K562 (cell line): ENCODE measurements at regions of chr22 and their contacts with region 1.

Region 1: DNA sequence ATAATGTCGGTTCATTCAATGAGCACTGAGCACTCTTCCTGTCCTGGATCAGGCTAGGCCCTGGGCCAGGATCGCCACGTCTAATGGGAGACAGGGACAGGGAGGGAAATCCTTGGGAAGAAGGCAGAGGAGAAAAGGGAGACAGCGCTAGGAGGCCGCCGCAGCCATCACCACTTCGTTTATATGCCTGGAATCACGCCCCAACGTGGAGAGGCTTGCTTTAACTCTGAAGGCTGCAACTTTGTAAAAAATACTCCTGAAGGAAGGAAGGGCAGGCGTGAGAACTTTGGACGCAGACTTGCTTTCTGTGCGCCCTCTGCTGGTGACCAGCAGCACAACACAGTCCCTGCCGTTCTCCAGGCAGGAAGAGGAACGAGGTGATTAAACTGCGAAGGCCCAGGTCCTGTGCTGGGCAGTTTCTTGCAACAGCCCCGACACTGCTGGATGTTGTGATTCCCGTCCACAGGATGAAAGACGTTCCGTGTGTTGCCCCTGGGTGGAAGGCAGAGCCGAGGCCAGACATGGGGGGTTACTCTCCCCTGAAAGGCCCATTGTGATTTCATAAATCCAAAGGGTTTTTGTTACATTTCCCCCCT is 22.1 kb downstream of the RIBC2 start:
- DNase-seq: peak; percentile 60 to 80 (median 70)
- ATAC-seq: peak; percentile 93
- H3K4me3 ChIP-seq: no peak overlapping the region
- H3K27ac ChIP-seq: no peak overlapping the region
- H3K4me1 ChIP-seq: no peaks in the 10 kb centered on the region
- H3K27me3 ChIP-seq: peaks cover 2 to 15% of the 10 kb centered on the region in 2 experiments; a peak in 2 of 5 replicates
- CTCF ChIP-seq: peak; percentile 76 to 82 (median 79)
- EP300 ChIP-seq: no peak
- POLR2A ChIP-seq: no peak
- RAD21 ChIP-seq: peak; percentile 55 to 85

Region 2: DNA sequence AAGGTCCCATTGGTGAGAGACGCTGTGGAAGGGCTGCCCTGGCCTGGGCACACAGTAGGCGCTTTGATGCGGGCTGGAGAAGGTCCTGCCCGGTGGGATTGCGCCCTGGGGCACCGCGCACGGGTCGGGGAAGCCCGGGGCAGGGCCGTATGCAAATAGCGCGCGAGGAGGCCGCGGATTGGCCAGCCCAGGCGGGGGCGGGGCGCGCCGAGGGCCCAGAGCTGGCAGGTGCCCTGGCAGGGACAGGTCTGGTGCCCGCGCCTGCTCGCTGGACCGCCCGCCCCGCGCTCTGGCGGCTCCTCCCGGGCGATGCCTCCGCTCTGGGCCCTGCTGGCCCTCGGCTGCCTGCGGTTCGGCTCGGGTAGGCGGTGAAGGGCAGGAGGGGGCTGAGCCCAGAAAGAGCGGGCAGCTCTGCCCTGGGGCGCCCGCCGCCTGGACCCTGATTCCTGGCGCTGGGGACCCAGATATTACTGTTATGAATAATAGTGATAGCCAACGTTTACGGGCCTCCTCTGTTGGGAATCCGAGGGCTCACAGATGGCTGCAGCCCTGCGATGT is 150.9 kb before region 1 on chr22 and contains the start of gene UPK3A:
- CTCF ChIA-PET with region 1: no interaction called
- POLR2A ChIA-PET with region 1: no interaction called
- in situ Hi-C with region 1: no loop called
- intact Hi-C with region 1: loop called (anchors 5 kb)
- DNase-seq: peak in 2 of 4 experiments; percentile 20 to 24
- ATAC-seq: peak; percentile 54
- H3K4me3 ChIP-seq: no peak within 1 kb of the TSS
- H3K27ac ChIP-seq: no peak within 1 kb of the TSS
- H3K4me1 ChIP-seq: peaks cover 0 to 7% of the 10 kb centered on the region in 2 experiments; a peak in 3 of 5 replicates
- H3K27me3 ChIP-seq: peaks cover 0 to 16% of the 10 kb centered on the region in 2 experiments; a peak in 2 of 5 replicates
- CTCF ChIP-seq: no peak
- EP300 ChIP-seq: no peak
- POLR2A ChIP-seq: no peak
- RAD21 ChIP-seq: no peak
- polyA plus RNA-seq, gene UPK3A: not detected